BJ (cell line): ENCODE measurements at regions of chr5 and their contacts with region 1.

Region 1: GRCh38 chr5:159106569-159107282 is 7.0 kb upstream of the EBF1 start:
- DNase-seq: no peak
- H3K4me3 ChIP-seq: peak overlapping the region; percentile 27
- H3K27me3 ChIP-seq: peaks cover 23% of the 10 kb centered on the region
- CTCF ChIP-seq: peak; percentile 91

Region 2: GRCh38 chr5:158074992-158075769 is 1031.5 kb before region 1 on chr5:
- CTCF ChIA-PET with region 1: interaction called, 29 read pairs
- POLR2A ChIA-PET with region 1: no interaction called
- DNase-seq: no peak
- H3K4me3 ChIP-seq: no peak overlapping the region
- H3K27me3 ChIP-seq: no peaks in the 10 kb centered on the region
- CTCF ChIP-seq: peak; percentile 92

Region 3: GRCh38 chr5:158170060-158170459 is 936.7 kb before region 1 on chr5:
- CTCF ChIA-PET with region 1: interaction called, 73 read pairs
- POLR2A ChIA-PET with region 1: no interaction called
- DNase-seq: no peak
- H3K4me3 ChIP-seq: no peak overlapping the region
- H3K27me3 ChIP-seq: no peaks in the 10 kb centered on the region; the same call in 1 of the 2 replicates
- CTCF ChIP-seq: no peak

Region 4: GRCh38 chr5:158174918-158175851 is 931.5 kb before region 1 on chr5:
- CTCF ChIA-PET with region 1: interaction called, 73 read pairs
- POLR2A ChIA-PET with region 1: no interaction called
- DNase-seq: no peak
- H3K4me3 ChIP-seq: no peak overlapping the region
- H3K27me3 ChIP-seq: no peaks in the 10 kb centered on the region; the same call in none of the 2 replicates
- CTCF ChIP-seq: peak; percentile 83

Region 5: GRCh38 chr5:159133041-159133741 is 26.5 kb after region 1 on chr5:
- CTCF ChIA-PET with region 1: interaction called, 11 read pairs
- POLR2A ChIA-PET with region 1: no interaction called
- DNase-seq: no peak
- H3K4me3 ChIP-seq: no peak overlapping the region
- H3K27me3 ChIP-seq: peaks cover 1% of the 10 kb centered on the region; the same call in 1 of the 2 replicates
- CTCF ChIP-seq: peak; percentile 71

Region 6: DNA sequence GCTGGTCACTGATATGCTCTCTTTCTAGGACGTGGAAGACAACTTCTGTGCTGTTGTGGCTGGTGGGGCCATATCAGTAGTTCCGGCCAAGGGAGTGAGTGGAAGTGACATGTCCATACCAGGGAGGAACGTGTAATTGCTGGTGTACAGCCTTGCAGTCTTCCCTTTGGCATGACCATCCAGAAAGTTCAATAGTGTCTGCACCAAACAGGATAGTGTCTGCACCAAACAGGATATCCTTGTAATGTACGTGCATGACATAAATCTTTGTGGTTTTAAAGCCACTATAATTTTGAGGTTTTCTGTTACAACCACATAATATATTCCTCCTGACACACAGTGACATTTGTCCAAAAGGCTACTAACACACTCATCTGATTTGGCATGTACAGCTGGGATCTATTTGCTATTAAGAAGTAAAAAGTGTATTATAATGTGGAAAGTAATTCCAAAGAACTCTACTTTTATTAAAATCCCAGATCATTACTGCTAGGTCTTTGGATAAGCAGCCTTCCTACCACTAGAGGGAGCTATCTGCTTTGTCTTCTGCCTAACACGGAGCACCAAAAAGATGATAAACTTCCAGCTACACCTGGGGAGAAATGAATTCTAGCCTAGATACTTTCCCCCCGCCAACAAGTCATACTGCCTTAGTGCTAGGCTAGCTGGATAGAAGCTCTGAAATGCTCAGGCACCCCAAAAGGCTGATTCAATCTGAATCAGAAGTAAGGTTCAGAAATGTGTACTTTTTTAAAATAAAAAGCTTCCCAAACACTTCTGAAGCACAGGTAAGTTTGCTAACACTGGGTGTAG is 49.9 kb after region 1 on chr5:
- CTCF ChIA-PET with region 1: no interaction called
- POLR2A ChIA-PET with region 1: no interaction called
- DNase-seq: no peak
- H3K4me3 ChIP-seq: no peak overlapping the region
- H3K27me3 ChIP-seq: no peaks in the 10 kb centered on the region
- CTCF ChIP-seq: peak; percentile 82